ENCODE measurements at regions of chr6 and their contacts with region 1.

Region 1: DNA sequence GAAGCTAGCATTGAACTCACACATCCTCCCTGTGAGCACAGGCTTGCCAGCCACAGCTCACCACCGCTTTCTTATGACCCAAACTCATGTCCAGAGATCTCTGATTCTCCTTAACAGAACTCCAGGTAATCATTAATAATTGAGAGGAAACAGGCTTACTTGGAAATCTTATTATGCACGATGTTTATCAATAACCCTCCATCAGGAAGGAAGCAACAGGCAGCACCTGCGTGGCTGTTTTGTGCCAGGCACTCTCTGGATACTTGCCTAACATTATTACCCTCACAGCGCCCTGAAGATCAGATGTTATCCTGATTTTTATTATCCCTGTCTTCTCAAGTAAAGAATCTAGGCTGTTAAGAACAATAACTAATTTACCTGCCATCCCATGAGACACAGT is 306.6 kb downstream of the PRKN start:
- DNase-seq: no peak
- H3K4me3 ChIP-seq: no peak overlapping the region
- H3K27ac ChIP-seq: no peak overlapping the region
- H3K4me1 ChIP-seq: no peaks in the 10 kb centered on the region
- H3K27me3 ChIP-seq: no peaks in the 10 kb centered on the region
- CTCF ChIP-seq: no peak
- EP300 ChIP-seq: no peak
- POLR2A ChIP-seq: no peak
- RAD21 ChIP-seq: no peak

Region 2: DNA sequence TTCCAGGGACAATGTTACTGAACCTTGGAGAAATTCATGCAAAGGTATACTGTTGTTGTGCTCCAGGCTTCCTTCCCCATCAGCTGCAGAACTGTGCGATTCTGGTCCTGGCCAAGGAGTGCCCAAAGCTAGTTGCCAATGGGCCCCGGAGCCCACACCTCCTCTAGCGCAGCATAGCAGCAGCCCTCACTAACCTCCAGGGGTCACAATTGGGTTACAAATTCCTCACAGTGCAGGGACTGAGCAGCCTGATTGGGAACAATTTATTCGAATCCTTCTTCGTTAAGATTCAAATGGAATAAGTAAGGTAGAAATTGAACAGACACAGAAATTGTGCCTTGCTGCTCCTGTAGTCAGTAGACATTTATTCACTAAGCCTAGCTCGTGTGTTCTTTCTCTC is 21.7 kb after region 1 on chr6:
- CTCF ChIA-PET with region 1: interaction called, 12 read pairs
- POLR2A ChIA-PET with region 1: no interaction called
- DNase-seq: peak; percentile 31 to 62
- H3K4me3 ChIP-seq: no peak overlapping the region
- H3K27ac ChIP-seq: no peak overlapping the region
- H3K4me1 ChIP-seq: peaks cover 0 to 7% (median 2%) of the 10 kb centered on the region in 4 experiments; a peak in 2 of 7 replicates
- H3K27me3 ChIP-seq: no peaks in the 10 kb centered on the region; a peak in 2 of 7 replicates
- CTCF ChIP-seq: peak; percentile 68 to 82 (median 78)
- EP300 ChIP-seq: no peak
- POLR2A ChIP-seq: no peak
- RAD21 ChIP-seq: peak; percentile 92 to 96

Region 3: GRCh38 chr6:162580619-162581018 is 159.6 kb after region 1 on chr6:
- CTCF ChIA-PET with region 1: no interaction called
- POLR2A ChIA-PET with region 1: no interaction called
- DNase-seq: no peak
- H3K4me3 ChIP-seq: no peak overlapping the region
- H3K27ac ChIP-seq: no peak overlapping the region
- H3K4me1 ChIP-seq: no peaks in the 10 kb centered on the region; a peak in 1 of 7 replicates
- H3K27me3 ChIP-seq: no peaks in the 10 kb centered on the region
- CTCF ChIP-seq: peak in 1 of 3 experiments; percentile 20; a peak in 1 of 4 replicates
- EP300 ChIP-seq: no peak
- POLR2A ChIP-seq: no peak
- RAD21 ChIP-seq: peak; percentile 20 to 23; a peak in 1 of 4 replicates

Measured in H1 (cell line).